ENCODE measurements at regions of chr12 and their contacts with region 1.

Region 1: GRCh38 chr12:130041983-130042812 is 120.1 kb upstream of the FZD10 start:
- DNase-seq: no peak
- H3K4me3 ChIP-seq: no peak overlapping the region
- H3K27ac ChIP-seq: no peak overlapping the region
- H3K4me1 ChIP-seq: peaks cover 0 to 22% (median 0%) of the 10 kb centered on the region in 3 donors
- H3K27me3 ChIP-seq: peaks cover 0 to 91% (median 0%) of the 10 kb centered on the region in 4 donors
- CTCF ChIP-seq: peak; percentile 50 to 96 (median 92)
- POLR2A ChIP-seq: no peak

Region 2: DNA sequence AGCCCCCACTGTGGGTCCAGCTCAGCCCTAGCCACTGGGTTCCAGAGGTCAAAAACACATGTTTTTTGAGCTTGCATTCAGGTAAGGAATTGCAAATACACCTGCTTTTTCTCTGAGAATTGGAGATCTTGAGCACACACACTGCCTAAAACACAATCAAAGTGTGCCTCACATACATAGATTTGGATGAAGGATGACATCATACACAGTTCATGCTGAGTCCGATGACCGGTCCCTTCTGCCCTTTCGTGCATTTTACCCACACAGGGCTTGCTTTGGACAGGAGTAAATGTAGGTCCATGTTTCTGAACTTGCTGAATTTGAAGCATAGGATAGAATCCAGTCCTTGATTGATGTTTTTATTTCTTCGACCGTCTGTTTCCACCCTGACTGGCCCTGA is 234.0 kb after region 1 on chr12:
- intact Hi-C with region 1: loop called (anchors 10 kb)
- DNase-seq: no peak
- H3K4me3 ChIP-seq: no peak overlapping the region
- H3K27ac ChIP-seq: no peak overlapping the region
- H3K4me1 ChIP-seq: peaks cover 0 to 6% (median 0%) of the 10 kb centered on the region in 3 donors
- H3K27me3 ChIP-seq: no peaks in the 10 kb centered on the region
- CTCF ChIP-seq: no peak
- POLR2A ChIP-seq: no peak

Region 3: DNA sequence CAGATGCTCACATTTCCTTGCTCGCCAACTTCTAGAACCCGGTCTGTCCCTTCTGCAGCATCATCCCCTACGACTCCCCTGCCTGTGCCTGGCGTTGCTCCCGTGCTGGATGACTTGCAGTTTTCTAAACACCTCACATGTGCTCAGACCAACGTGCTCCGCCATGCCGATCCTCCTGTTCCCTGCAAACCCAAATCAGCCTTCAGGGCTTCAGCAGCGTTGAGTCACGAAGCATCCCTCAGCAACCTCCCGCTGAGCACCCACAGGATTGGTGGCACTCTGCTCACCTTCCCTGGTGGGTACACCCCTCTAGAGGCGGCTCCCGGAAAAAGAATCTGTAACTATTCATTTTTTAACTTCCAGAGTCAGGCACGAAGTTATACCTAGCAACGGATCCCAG is 292.7 kb after region 1 on chr12:
- intact Hi-C with region 1: loop called (anchors 5 kb)
- DNase-seq: no peak
- H3K4me3 ChIP-seq: no peak overlapping the region
- H3K27ac ChIP-seq: no peak overlapping the region
- H3K4me1 ChIP-seq: peaks cover 0 to 12% (median 8%) of the 10 kb centered on the region in 3 donors
- H3K27me3 ChIP-seq: peaks cover 0 to 36% (median 5%) of the 10 kb centered on the region in 4 donors
- CTCF ChIP-seq: no peak
- POLR2A ChIP-seq: no peak

Region 4: GRCh38 chr12:130747867-130748740 is 705.9 kb after region 1 on chr12:
- intact Hi-C with region 1: loop called (anchors 10 kb)
- DNase-seq: no peak
- H3K4me3 ChIP-seq: peak overlapping the region in 1 of 4 donors; percentile 30
- H3K27ac ChIP-seq: no peak overlapping the region
- H3K4me1 ChIP-seq: peaks cover 3 to 8% (median 3%) of the 10 kb centered on the region in 3 donors
- H3K27me3 ChIP-seq: peaks cover 0 to 36% (median 0%) of the 10 kb centered on the region in 4 donors
- CTCF ChIP-seq: peak; percentile 56 to 87 (median 73)
- POLR2A ChIP-seq: no peak